ENCODE measurements at regions of chr19 and their contacts with region 1.

Region 1: DNA sequence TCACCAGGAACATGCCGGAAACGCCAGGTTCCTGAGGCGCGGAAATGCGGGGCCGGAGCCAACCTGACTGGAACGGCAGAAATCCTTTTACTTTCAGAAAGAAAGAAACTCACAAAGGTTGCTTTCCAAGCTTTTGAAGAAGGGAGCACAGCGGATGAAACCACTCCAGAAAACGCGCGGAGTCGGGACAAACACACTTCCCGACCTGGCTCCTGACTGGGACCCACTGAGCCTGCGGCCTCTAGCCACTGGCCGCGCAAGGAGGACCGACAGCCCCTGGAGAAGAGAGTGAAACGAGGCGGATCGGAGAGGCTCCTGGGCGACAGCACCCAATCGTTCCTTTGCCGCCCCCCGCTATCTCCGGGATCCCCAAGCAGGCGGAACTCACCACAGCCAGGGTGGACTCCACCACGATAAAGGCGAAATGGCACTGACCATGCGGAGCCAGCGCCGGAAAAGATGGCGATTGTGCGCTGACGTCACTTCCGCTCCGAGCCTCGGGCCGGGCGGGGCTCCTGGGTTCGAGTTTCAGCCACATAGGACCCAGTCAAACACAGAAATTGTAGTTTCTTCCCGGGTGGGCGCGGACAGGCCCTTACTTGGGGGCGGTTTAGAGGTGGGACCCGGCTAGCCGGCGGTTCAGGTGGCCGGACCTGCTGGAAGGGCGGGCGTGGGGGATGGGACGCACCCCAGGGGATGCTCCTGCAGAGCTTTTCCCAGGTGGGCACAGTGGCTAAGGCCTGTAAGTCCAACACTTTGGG is at the start of gene ZNF121:
- DNase-seq: peak; percentile 61 to 82 (median 74)
- ATAC-seq: peak; percentile 87
- H3K4me3 ChIP-seq: peak within 1 kb of the TSS; percentile 98
- H3K4me3 Mint-ChIP-seq: peak within 1 kb of the TSS; percentile 91 to 99 (median 96)
- H3K27ac ChIP-seq: peak within 1 kb of the TSS; percentile 97
- H3K27ac Mint-ChIP-seq: peak within 1 kb of the TSS; percentile 94 to 99 (median 95)
- H3K4me1 ChIP-seq: peaks cover 7 to 15% of the 10 kb centered on the region in 2 donors
- H3K4me1 Mint-ChIP-seq: peaks cover 21 to 54% (median 34%) of the 10 kb centered on the region in 7 donors
- H3K27me3 ChIP-seq: no peaks in the 10 kb centered on the region
- H3K27me3 Mint-ChIP-seq: peaks cover 0 to 5% (median 4%) of the 10 kb centered on the region in 5 donors
- total RNA-seq, gene ZNF121: 28.3 to 49.4 (median 47.0) TPM

Region 2: GRCh38 chr19:8487137-8487851 is 1097.0 kb before region 1 on chr19:
- CTCF ChIA-PET with region 1: no interaction called
- POLR2A ChIA-PET with region 1: no interaction called
- intact Hi-C with region 1: no loop called
- DNase-seq: peak; percentile 38 to 73 (median 59)
- ATAC-seq: peak; percentile 79
- H3K4me3 ChIP-seq: no peak overlapping the region
- H3K4me3 Mint-ChIP-seq: peak overlapping the region; percentile 33 to 85 (median 68)
- H3K27ac ChIP-seq: peak overlapping the region; percentile 48
- H3K27ac Mint-ChIP-seq: peak overlapping the region; percentile 82 to 95 (median 90)
- H3K4me1 ChIP-seq: peaks cover 15 to 26% of the 10 kb centered on the region in 2 donors
- H3K4me1 Mint-ChIP-seq: peaks cover 29 to 47% (median 34%) of the 10 kb centered on the region in 7 donors
- H3K27me3 ChIP-seq: no peaks in the 10 kb centered on the region
- H3K27me3 Mint-ChIP-seq: no peaks in the 10 kb centered on the region

Region 3: GRCh38 chr19:8663920-8664670 is 920.2 kb before region 1 on chr19:
- CTCF ChIA-PET with region 1: no interaction called
- POLR2A ChIA-PET with region 1: no interaction called
- intact Hi-C with region 1: no loop called
- DNase-seq: peak in 5 of 9 donors; percentile 12 to 21 (median 18)
- ATAC-seq: peak; percentile 51
- H3K4me3 ChIP-seq: peak overlapping the region; percentile 10
- H3K4me3 Mint-ChIP-seq: peak overlapping the region in 9 of 10 donors; percentile 16 to 75 (median 60)
- H3K27ac ChIP-seq: no peak overlapping the region
- H3K27ac Mint-ChIP-seq: peak overlapping the region; percentile 26 to 87 (median 65)
- H3K4me1 ChIP-seq: peaks cover 14 to 17% of the 10 kb centered on the region in 2 donors
- H3K4me1 Mint-ChIP-seq: peaks cover 21 to 49% (median 30%) of the 10 kb centered on the region in 7 donors
- H3K27me3 ChIP-seq: no peaks in the 10 kb centered on the region
- H3K27me3 Mint-ChIP-seq: no peaks in the 10 kb centered on the region

Region 4: DNA sequence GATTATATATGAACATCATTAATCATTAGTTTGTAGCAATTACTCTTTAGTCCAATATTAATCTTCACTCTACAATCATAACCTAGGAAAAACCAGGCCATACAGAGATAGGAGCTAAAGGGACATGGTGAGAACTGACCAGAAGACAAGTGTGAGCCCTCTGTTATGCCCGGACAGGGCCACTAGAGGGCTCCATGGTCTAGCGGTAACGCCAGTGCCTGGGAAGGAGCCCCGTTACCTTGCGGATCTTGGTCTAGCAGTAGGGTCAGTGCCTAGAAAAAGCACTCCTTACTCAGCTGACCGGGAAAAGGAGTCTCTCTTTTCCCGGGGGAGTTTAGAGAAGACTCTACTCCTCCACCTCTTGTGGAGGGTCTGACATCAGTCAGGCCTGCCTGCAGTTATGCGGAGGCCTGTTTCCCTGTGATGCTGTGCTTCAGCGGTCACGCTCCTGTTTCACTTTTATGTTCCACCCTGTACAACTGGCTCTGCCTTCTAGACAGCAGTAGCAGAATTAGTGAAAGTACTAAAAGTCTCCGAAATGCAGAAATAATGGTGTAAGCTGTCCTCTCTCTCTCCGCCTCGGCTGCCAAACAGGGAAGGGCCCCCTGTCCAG is 378.6 kb before region 1 on chr19:
- CTCF ChIA-PET with region 1: interaction called, 4 read pairs
- POLR2A ChIA-PET with region 1: interaction called, 6 read pairs
- intact Hi-C with region 1: loop called in 1 of 2 experiments (anchors 1 kb)
- DNase-seq: peak; percentile 36 to 63 (median 53)
- ATAC-seq: peak; percentile 69
- H3K4me3 ChIP-seq: no peak overlapping the region
- H3K4me3 Mint-ChIP-seq: peak overlapping the region in 9 of 10 donors; percentile 37 to 69 (median 56)
- H3K27ac ChIP-seq: no peak overlapping the region
- H3K27ac Mint-ChIP-seq: no peak overlapping the region
- H3K4me1 ChIP-seq: no peaks in the 10 kb centered on the region
- H3K4me1 Mint-ChIP-seq: peaks cover 0 to 8% (median 0%) of the 10 kb centered on the region in 7 donors
- H3K27me3 ChIP-seq: no peaks in the 10 kb centered on the region
- H3K27me3 Mint-ChIP-seq: peaks cover 0 to 22% (median 6%) of the 10 kb centered on the region in 5 donors

Region 5: DNA sequence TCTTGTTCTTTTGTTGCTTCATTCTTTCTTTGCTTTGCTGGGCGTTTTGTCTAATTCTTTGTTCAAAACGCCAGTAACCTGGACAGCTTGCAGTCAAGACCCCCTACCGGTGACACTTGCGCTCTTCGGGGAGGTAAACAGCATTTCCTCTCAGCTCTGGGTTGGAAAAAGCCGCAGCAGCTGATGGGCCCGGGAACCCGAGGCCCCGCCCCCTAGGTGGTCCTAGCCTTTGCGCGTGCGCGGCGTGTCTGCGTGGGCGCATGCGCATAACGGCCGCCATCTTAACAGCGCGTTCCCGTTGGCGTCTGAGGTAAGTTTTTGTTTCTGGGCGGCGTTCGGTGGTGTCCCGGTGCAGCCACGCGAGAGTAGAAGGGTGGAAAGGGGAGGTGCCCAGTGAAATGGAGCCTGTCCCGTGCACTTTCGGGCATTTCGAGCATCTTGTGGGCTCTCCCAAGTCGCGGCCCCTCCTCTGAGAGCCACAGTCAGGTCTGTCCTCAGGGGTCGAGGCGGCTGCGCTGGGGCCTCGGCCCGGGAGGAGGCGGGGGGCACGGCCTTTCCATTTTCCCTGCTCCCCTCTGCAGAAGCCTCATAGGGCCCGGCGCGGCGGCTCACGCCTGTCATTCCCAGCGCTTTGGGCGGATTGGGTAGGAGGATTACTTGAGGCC is 260.2 kb before region 1 on chr19 and contains the start of gene ZNF559:
- CTCF ChIA-PET with region 1: no interaction called
- POLR2A ChIA-PET with region 1: no interaction called
- intact Hi-C with region 1: loop called in 1 of 2 experiments (anchors 5 kb)
- DNase-seq: peak; percentile 93 to 99 (median 97)
- ATAC-seq: peak; percentile 97
- H3K4me3 ChIP-seq: peak within 1 kb of the TSS; percentile 74
- H3K4me3 Mint-ChIP-seq: peak within 1 kb of the TSS; percentile 92 to 99 (median 95)
- H3K27ac ChIP-seq: peak within 1 kb of the TSS; percentile 85
- H3K27ac Mint-ChIP-seq: peak within 1 kb of the TSS; percentile 91 to 97 (median 93)
- H3K4me1 ChIP-seq: peaks cover 0 to 10% of the 10 kb centered on the region in 2 donors
- H3K4me1 Mint-ChIP-seq: peaks cover 6 to 46% (median 29%) of the 10 kb centered on the region in 7 donors
- H3K27me3 ChIP-seq: no peaks in the 10 kb centered on the region
- H3K27me3 Mint-ChIP-seq: peaks cover 0 to 2% (median 0%) of the 10 kb centered on the region in 5 donors
- total RNA-seq, gene ZNF559: 9.1 to 58.2 (median 16.5) TPM

Region 6: DNA sequence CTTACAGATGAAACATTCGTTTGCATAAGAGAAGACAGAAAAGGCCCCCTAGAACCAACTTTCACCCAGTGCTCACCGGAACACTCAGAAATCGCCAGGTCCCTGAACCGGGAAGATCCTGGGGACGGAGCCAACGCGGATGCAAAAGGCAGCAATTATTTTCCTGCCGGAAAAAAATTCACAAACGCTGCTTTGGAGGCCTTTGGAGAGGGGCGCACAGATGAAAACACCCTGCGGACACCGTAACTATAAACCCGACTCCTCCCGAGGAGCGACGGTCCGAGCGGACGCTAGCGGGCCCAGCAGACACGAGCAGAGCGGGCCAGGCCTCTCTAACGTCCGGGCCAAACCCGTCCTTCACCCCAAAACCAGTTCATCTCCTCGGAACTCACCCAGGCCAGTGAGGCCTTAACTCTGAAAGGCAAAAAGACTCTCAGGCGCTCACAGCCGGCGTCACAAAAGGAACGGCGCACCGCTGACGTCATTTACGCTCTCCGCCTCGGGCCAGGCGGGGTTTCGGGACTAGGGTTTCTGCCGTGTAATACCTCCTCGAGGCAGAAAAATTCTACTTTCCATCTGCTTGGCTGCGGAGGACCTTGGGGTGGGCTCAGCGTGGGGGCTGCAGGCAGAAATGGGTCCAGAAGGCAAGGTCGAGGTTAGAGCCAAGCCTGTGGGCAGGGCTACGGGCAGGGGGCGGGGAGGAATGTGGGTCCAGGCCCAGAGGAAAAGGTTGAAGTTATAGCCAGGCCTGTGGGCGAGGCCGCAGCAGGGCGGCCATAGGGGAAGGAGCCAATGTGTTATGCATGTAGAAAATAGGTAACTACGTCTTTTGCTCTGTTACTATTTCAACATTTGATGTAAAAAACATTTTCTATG is 45.8 kb before region 1 on chr19 and contains the start of gene ZNF426:
- CTCF ChIA-PET with region 1: no interaction called
- POLR2A ChIA-PET with region 1: interaction called, 3 read pairs
- intact Hi-C with region 1: loop called (anchors 1 kb)
- DNase-seq: peak; percentile 76 to 90 (median 85)
- ATAC-seq: peak; percentile 96
- H3K4me3 ChIP-seq: peak within 1 kb of the TSS; percentile 93
- H3K4me3 Mint-ChIP-seq: peak within 1 kb of the TSS; percentile 89 to 99 (median 98)
- H3K27ac ChIP-seq: peak within 1 kb of the TSS; percentile 90
- H3K27ac Mint-ChIP-seq: peak within 1 kb of the TSS; percentile 95 to 100 (median 97)
- H3K4me1 ChIP-seq: peaks cover 0 to 7% of the 10 kb centered on the region in 2 donors
- H3K4me1 Mint-ChIP-seq: peaks cover 14 to 46% (median 33%) of the 10 kb centered on the region in 7 donors
- H3K27me3 ChIP-seq: no peaks in the 10 kb centered on the region
- H3K27me3 Mint-ChIP-seq: no peaks in the 10 kb centered on the region
- total RNA-seq, gene ZNF426: 11.2 to 22.6 (median 15.8) TPM

Region 7: GRCh38 chr19:9768175-9769112 is 184.2 kb after region 1 on chr19 and contains the start of gene ZNF846:
- CTCF ChIA-PET with region 1: no interaction called
- POLR2A ChIA-PET with region 1: interaction called, 6 read pairs
- intact Hi-C with region 1: loop called in 1 of 2 experiments (anchors 1 kb)
- DNase-seq: peak; percentile 83 to 94 (median 91)
- ATAC-seq: peak; percentile 98
- H3K4me3 ChIP-seq: peak within 1 kb of the TSS; percentile 95
- H3K4me3 Mint-ChIP-seq: peak within 1 kb of the TSS; percentile 81 to 99 (median 95)
- H3K27ac ChIP-seq: peak within 1 kb of the TSS; percentile 93
- H3K27ac Mint-ChIP-seq: peak within 1 kb of the TSS; percentile 92 to 100 (median 97)
- H3K4me1 ChIP-seq: peaks cover 8 to 10% of the 10 kb centered on the region in 2 donors
- H3K4me1 Mint-ChIP-seq: peaks cover 0 to 21% (median 9%) of the 10 kb centered on the region in 7 donors
- H3K27me3 ChIP-seq: no peaks in the 10 kb centered on the region
- H3K27me3 Mint-ChIP-seq: no peaks in the 10 kb centered on the region
- total RNA-seq, gene ZNF846: 5.1 to 24.8 (median 13.0) TPM

Measured in naive thymus-derived CD4-positive, alpha-beta T cell (primary cell).